Left ventricle myocardium superior (tissue), 1 donor: ENCODE measurements at regions of chr2 and their contacts with region 1.

Region 1: GRCh38 chr2:96907115-96908041 is 37.5 kb upstream of the SEMA4C start:
- DNase-seq: peak; percentile 91
- ATAC-seq: peak; percentile 92

Region 2: DNA sequence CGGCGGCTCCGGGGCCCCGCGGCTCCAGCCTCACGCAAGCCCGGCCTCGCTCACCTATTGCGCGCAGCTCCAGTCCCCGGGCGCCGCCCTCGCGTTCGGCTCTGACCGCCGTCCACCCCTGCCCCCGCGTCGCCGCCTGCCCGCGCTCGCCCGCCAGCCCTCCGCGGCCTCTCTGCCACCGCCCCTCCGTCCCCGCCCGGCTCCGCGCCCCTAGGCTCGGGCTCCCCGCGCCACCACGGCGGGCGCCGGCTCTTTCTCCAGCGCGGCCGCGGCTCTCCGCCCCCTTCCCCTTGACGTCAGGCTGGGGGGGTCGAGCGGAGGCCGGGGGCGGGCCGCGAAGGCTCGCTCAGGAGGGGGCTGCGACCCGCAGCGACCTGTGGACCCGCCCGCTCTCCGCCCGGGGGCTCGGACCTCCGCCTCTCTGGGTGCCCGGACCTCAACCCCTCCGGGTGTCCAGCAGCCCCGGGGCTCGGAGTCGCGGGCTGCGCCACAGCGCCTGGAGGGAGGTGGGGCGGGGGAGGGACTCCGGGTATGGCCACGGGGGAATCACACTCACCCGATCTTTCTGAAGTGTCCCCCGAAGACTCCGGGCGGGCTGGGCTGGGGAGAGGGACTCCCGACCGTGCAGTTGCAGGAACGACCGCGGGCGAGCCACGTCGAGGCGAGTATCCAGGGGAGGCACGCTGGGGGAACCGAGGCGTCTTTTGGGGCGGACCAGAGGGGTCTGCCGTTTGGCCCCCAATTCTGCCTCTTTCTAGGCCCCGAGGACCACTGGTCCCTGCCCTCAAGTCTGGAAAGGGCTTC is 37.4 kb before region 1 on chr2 and contains the start of gene SEMA4C:
- intact Hi-C with region 1: loop called (anchors 5 kb)
- DNase-seq: peak; percentile 83
- ATAC-seq: peak; percentile 58
- total RNA-seq, gene SEMA4C: 17.0 TPM